A549 (cell line): ENCODE measurements at regions of chr22 and their contacts with region 1.

Region 1: GRCh38 chr22:30253205-30253852 is 6.8 kb upstream of the LIF start:
- DNase-seq: peak; percentile 62 to 93
- ATAC-seq: peak in 1 of 2 experiments; percentile 9; a peak in 3 of 6 replicates
- H3K4me3 ChIP-seq: peak overlapping the region; percentile 72
- H3K27ac ChIP-seq: peak overlapping the region; percentile 99 to 100
- H3K4me1 ChIP-seq: peaks cover 74% of the 10 kb centered on the region
- CTCF ChIP-seq: no peak
- EP300 ChIP-seq: peak; percentile 81 to 91; a peak in 3 of 5 replicates
- POLR2A ChIP-seq: no peak
- RAD21 ChIP-seq: peak in 1 of 2 experiments; percentile 7; a peak in 2 of 5 replicates

Region 2: DNA sequence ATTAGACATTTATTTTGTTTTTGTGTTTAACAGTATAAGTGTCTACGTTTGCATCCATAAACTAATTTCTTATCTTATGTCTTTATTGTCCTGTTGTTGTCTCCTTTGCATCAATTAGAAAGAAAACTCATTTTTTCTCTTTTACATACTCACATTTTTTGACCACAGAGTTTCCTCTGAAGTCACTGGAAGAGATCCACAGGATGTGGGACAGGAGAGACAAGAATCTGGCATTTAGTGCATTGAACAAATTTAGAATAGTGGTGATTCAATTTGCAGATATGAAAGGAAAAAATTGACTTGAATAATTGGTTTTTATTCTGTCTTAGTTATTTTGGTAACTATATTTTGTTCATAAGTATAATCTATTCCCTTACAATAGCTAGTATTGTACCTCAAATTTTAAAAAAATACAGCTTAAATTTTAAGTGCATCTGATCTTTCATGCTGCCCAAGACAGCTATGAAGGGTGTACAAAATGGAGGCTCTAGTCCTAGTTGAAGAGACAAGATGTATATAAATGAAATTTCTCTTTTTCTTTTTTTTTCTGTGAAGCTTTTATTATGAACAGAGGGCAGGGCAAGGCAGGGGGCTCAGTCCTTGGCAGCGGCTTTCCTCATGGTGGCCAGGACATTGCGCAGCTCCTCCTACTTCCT is 148.7 kb before region 1 on chr22:
- CTCF ChIA-PET with region 1: interaction called, 25 read pairs
- POLR2A ChIA-PET with region 1: interaction called, 3 read pairs
- DNase-seq: no peak
- ATAC-seq: no peak
- H3K4me3 ChIP-seq: no peak overlapping the region
- H3K27ac ChIP-seq: peak overlapping the region in 1 of 2 experiments; percentile 72; a peak in 4 of 6 replicates
- H3K4me1 ChIP-seq: peaks cover 29% of the 10 kb centered on the region
- CTCF ChIP-seq: no peak
- EP300 ChIP-seq: no peak
- POLR2A ChIP-seq: no peak
- RAD21 ChIP-seq: no peak

Region 3: DNA sequence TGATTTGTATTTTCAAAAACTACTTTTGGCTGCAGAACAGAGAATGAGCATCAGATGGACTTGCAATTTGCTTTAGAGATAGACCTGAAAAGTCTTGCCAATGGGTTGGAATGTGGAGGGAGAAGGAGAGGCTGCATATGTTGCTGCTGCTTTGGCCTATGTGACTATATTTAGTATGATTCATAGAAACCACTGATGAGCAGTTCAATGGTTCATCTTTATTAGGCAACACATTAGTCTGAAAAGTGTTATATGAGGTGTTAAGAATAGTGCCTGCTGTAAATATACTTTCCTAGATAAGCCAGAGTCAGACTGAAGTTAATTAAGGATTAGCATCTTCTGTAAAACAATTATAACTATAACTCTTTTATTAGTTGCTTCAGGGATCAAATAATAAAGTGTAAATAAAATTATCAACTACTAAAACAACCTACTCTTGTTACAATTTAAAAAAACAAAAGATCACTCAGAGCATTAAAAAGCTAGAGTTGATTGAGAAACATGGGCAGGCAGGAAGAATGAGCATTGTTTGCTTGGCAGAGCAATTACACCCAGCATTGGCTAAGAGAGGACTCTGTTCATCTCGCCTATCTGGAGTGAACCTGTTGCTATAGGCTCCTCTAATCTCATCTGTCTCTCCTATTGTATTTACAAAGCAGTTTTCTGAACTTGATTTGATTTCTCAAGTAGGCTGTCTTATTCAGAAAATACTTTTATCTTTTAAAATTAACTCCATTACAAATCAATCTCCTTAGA is 136.8 kb before region 1 on chr22:
- CTCF ChIA-PET with region 1: interaction called, 10 read pairs
- POLR2A ChIA-PET with region 1: no interaction called
- DNase-seq: no peak
- ATAC-seq: peak; percentile 50 to 71; a peak in 4 of 6 replicates
- H3K4me3 ChIP-seq: no peak overlapping the region
- H3K27ac ChIP-seq: peak overlapping the region; percentile 49 to 84; a peak in 5 of 6 replicates
- H3K4me1 ChIP-seq: peaks cover 37% of the 10 kb centered on the region
- CTCF ChIP-seq: no peak
- EP300 ChIP-seq: no peak
- POLR2A ChIP-seq: no peak
- RAD21 ChIP-seq: no peak

Region 4: GRCh38 chr22:30205281-30206115 is 47.8 kb before region 1 on chr22:
- CTCF ChIA-PET with region 1: interaction called, 14 read pairs
- POLR2A ChIA-PET with region 1: interaction called, 8 read pairs
- DNase-seq: peak; percentile 91 to 99
- ATAC-seq: peak; percentile 74 to 81
- H3K4me3 ChIP-seq: no peak overlapping the region
- H3K27ac ChIP-seq: peak overlapping the region; percentile 95 to 100
- H3K4me1 ChIP-seq: peaks cover 63% of the 10 kb centered on the region
- CTCF ChIP-seq: no peak
- EP300 ChIP-seq: peak; percentile 98 to 99; a peak in 3 of 5 replicates
- POLR2A ChIP-seq: no peak
- RAD21 ChIP-seq: peak; percentile 4 to 49; a peak in 2 of 5 replicates

Region 5: DNA sequence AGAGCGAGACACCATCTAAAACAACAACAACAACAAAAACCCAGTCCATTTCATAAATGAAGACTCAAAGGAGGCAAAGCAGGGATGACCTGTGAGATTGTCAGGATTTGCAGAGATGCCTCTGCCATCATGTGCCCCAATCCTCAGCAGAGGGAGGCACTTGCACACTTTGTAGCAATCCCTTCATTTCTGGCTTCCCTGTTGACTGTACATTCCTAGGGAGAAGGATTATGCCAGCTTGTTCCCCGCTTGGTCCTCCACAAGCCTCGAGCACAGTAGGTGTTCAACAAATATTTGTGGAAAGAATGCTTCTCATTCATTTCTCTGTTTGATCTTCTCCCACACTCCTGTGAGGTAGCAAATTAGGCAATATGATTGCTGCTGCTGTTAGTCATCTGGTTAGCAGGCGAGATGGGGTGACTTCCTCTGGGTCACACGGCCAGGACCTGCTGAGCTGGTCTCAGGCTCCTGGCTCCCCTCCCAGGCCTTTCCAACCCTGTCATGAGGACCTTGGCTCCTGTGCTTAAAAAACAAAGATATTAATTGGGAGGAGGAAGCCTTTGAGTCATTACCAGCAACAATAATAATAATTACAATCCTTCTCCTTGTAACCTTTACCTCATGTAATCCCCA is 40.9 kb before region 1 on chr22:
- CTCF ChIA-PET with region 1: interaction called, 10 read pairs
- POLR2A ChIA-PET with region 1: interaction called, 8 read pairs
- DNase-seq: peak; percentile 81 to 98
- ATAC-seq: peak; percentile 80 to 87
- H3K4me3 ChIP-seq: no peak overlapping the region
- H3K27ac ChIP-seq: peak overlapping the region; percentile 95 to 100
- H3K4me1 ChIP-seq: peaks cover 81% of the 10 kb centered on the region
- CTCF ChIP-seq: 0 out of 3 replicates have a peak, but pooled peaks have one; percentile 12
- EP300 ChIP-seq: peak; percentile 99
- POLR2A ChIP-seq: no peak
- RAD21 ChIP-seq: peak; percentile 67 to 68

Region 6: GRCh38 chr22:30224161-30224857 is 29.0 kb before region 1 on chr22:
- CTCF ChIA-PET with region 1: interaction called, 15 read pairs
- POLR2A ChIA-PET with region 1: no interaction called
- DNase-seq: peak; percentile 85 to 94
- ATAC-seq: peak; percentile 81
- H3K4me3 ChIP-seq: no peak overlapping the region
- H3K27ac ChIP-seq: peak overlapping the region; percentile 95 to 100
- H3K4me1 ChIP-seq: peaks cover 76% of the 10 kb centered on the region
- CTCF ChIP-seq: no peak
- EP300 ChIP-seq: peak; percentile 57 to 59; a peak in 2 of 5 replicates
- POLR2A ChIP-seq: no peak
- RAD21 ChIP-seq: 0 out of 5 replicates have a peak, but pooled peaks have one; percentile 12 to 17

Region 7: DNA sequence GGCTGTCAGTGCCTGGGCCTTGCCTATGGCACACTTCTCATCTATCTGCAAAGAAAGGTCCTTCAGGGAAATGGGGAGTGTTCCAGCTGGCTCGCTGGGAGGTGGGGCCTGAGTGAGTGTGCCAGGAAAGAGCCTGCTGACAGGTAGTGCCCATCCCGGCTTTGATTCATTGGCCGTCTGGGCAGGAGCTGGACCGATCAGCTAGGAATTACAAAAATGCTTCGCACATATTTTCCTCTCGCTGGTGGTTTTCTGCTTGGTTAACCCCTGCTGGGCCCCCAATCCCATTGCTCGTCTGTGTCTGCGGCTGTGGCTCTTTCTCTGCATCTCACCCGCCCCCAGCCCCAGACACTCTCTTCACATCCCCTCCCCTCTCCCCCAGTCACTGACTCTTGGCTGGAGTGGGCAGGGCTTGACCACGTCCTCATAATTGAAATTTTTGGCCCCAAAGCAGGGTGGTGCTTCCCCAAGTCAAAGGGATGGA is 17.6 kb before region 1 on chr22:
- CTCF ChIA-PET with region 1: interaction called, 15 read pairs
- POLR2A ChIA-PET with region 1: interaction called, 9 read pairs
- DNase-seq: peak; percentile 74 to 90
- ATAC-seq: peak; percentile 52 to 69
- H3K4me3 ChIP-seq: no peak overlapping the region
- H3K27ac ChIP-seq: peak overlapping the region; percentile 99 to 100
- H3K4me1 ChIP-seq: peaks cover 78% of the 10 kb centered on the region
- CTCF ChIP-seq: no peak
- EP300 ChIP-seq: peak; percentile 47 to 92; a peak in 2 of 5 replicates
- POLR2A ChIP-seq: no peak
- RAD21 ChIP-seq: peak in 1 of 2 experiments; percentile 37; a peak in 1 of 5 replicates

Region 8: GRCh38 chr22:30270832-30271231 is 17.5 kb after region 1 on chr22:
- CTCF ChIA-PET with region 1: no interaction called
- POLR2A ChIA-PET with region 1: no interaction called
- DNase-seq: no peak
- ATAC-seq: peak in 1 of 2 experiments; percentile 15; a peak in 2 of 6 replicates
- H3K4me3 ChIP-seq: no peak overlapping the region
- H3K27ac ChIP-seq: 0 out of 6 replicates have a peak overlapping the region, but pooled peaks of 1 of the 2 experiments have one; percentile 24
- H3K4me1 ChIP-seq: no peaks in the 10 kb centered on the region
- CTCF ChIP-seq: no peak
- EP300 ChIP-seq: no peak
- POLR2A ChIP-seq: no peak
- RAD21 ChIP-seq: no peak